Panc1 (cell line): ENCODE measurements at regions of chr7 and their contacts with region 1.

Region 1: DNA sequence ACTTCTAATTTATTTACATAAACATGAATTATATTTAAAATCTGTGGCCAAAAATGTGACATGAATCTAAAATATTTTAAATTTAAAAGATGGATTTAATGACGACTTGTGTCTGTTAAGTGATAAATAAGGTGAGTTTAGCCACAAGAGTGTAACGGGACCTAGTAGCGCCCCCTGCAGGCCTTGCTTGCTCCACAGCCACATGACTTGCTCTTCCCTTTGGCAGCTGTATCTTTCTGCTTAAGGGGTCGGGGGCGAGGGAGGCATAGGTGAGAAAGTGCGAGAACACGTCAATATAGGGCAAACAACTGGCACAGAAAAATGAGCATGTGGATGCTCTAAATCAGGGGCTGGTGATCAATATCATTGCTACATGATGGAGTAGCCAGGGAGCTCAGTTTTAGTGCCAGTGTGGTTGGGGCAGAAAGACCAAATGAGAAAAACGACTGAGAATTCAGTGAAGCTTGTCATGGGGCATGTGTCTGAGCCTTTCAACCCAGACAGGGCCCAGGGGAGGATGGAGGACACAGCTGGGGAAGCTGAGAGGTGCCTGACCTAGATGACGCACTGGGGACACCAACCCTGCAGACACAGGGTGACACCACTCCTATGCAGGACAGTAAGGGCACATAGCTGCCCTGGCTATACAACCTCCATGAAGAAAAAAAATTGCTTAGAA is 49.8 kb downstream of the PAXIP1 start:
- DNase-seq: peak; percentile 24
- ATAC-seq: peak; percentile 77; the same call in 1 of the 2 replicates
- H3K4me3 ChIP-seq: no peak overlapping the region
- H3K27ac ChIP-seq: no peak overlapping the region
- H3K4me1 ChIP-seq: no peaks in the 10 kb centered on the region
- H3K27me3 ChIP-seq: no peaks in the 10 kb centered on the region
- CTCF ChIP-seq: peak; percentile 89

Region 2: DNA sequence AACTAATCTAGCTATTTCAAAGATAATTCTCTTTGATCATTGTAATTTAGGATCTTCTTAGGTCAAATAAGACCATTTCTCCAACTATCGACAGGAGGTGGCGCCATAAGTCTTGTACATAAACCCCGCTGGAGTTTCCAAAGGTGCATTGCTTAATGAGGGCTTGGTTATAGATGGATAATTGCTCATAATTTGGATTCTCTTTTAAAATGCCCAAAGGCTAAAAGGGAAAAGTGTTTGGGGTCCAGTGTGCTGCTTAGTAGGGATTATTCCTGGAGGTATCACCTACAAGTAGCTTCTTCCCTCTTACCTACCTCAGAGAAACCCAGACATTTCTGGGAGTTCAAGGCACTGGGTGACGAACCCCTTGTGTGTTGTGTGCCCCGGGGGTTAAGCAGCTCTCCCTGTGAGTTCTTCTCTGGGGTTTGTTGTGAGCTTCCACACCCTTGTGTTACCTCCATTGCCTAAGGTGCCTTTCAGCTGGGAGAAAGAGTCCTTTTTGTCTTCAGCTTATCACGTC is 25.5 kb before region 1 on chr7:
- CTCF ChIA-PET with region 1: interaction called, 10 read pairs
- POLR2A ChIA-PET with region 1: no interaction called
- in situ Hi-C with region 1: no loop called
- intact Hi-C with region 1: no loop called
- DNase-seq: peak; percentile 86
- ATAC-seq: peak; percentile 80
- H3K4me3 ChIP-seq: peak overlapping the region; percentile 73 to 95
- H3K27ac ChIP-seq: peak overlapping the region; percentile 89
- H3K4me1 ChIP-seq: peaks cover 6% of the 10 kb centered on the region; the same call in 1 of the 2 replicates
- H3K27me3 ChIP-seq: no peaks in the 10 kb centered on the region; the same call in 1 of the 2 replicates
- CTCF ChIP-seq: peak; percentile 74

Region 3: GRCh38 chr7:154984601-154985188 is 31.6 kb after region 1 on chr7:
- CTCF ChIA-PET with region 1: interaction called, 13 read pairs
- POLR2A ChIA-PET with region 1: no interaction called
- in situ Hi-C with region 1: no loop called
- intact Hi-C with region 1: no loop called
- DNase-seq: no peak
- ATAC-seq: no peak
- H3K4me3 ChIP-seq: no peak overlapping the region
- H3K27ac ChIP-seq: no peak overlapping the region
- H3K4me1 ChIP-seq: no peaks in the 10 kb centered on the region
- H3K27me3 ChIP-seq: no peaks in the 10 kb centered on the region
- CTCF ChIP-seq: no peak